Heart right ventricle (tissue), 16 donors: ENCODE measurements at regions of chr15 and their contacts with region 1.

Region 1: DNA sequence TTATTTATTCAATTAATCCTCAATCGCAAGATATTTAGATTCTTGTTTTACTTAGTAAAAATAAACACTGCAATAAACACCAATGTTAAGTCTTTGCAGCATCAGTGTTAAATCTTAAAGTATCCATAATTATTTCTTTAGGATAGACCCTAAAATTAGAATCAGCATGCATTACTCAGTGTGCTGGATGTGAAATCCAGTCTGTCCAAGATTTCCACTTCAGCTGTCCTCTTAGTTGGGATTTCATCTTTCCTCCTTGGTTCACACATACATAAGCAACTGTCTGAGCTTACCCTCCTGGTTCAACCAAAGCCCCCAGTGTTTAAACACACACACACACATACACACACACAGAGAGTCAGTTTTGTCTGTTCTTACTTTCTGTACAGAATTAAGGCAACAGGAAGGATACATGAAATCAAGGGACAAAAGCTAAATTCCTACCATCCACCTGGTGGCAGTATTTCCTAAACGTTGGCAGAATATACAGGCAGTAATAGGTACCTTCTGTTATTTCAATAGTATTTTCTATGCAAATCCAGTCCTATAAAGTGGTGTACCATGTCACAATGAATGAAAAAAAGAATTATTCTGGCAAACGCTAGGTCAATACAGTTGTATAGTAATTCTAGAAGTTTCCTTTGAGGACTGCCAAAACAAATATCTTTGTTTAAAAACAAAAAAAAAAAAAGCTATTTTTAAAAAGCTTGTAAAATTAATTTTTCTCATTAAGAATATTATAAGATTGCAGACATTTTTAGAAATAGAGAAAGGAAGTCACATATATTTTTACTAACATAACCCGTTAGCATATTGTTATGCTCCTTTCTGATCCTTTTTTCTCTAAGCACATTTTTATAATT is 27.3 kb upstream of the DMXL2 start:
- DNase-seq: peak in 1 of 2 donors; percentile 62
- ATAC-seq: peak in 7 of 8 donors; percentile 55 to 80 (median 71)
- H3K4me3 ChIP-seq: no peak overlapping the region
- H3K27ac ChIP-seq: no peak overlapping the region
- H3K4me1 ChIP-seq: peaks cover 0 to 10% (median 0%) of the 10 kb centered on the region in 9 donors
- H3K27me3 ChIP-seq: no peaks in the 10 kb centered on the region
- CTCF ChIP-seq: peak; percentile 48 to 87 (median 75)

Region 2: GRCh38 chr15:51536965-51537574 is 112.8 kb before region 1 on chr15:
- intact Hi-C with region 1: no loop called
- DNase-seq: no peak
- ATAC-seq: no peak
- H3K4me3 ChIP-seq: no peak overlapping the region
- H3K27ac ChIP-seq: no peak overlapping the region
- H3K4me1 ChIP-seq: no peaks in the 10 kb centered on the region
- H3K27me3 ChIP-seq: no peaks in the 10 kb centered on the region
- CTCF ChIP-seq: peak in 8 of 9 donors; percentile 5 to 62 (median 36)

Region 3: GRCh38 chr15:51708013-51708412 is 58.1 kb after region 1 on chr15:
- intact Hi-C with region 1: loop called in 1 of 10 experiments (anchors 10 kb)
- DNase-seq: no peak
- ATAC-seq: peak in 6 of 8 donors; percentile 44 to 72 (median 56)
- H3K4me3 ChIP-seq: no peak overlapping the region
- H3K27ac ChIP-seq: peak overlapping the region in 4 of 10 donors; percentile 13 to 62 (median 41)
- H3K4me1 ChIP-seq: no peaks in the 10 kb centered on the region
- H3K27me3 ChIP-seq: no peaks in the 10 kb centered on the region
- CTCF ChIP-seq: no peak

Region 4: DNA sequence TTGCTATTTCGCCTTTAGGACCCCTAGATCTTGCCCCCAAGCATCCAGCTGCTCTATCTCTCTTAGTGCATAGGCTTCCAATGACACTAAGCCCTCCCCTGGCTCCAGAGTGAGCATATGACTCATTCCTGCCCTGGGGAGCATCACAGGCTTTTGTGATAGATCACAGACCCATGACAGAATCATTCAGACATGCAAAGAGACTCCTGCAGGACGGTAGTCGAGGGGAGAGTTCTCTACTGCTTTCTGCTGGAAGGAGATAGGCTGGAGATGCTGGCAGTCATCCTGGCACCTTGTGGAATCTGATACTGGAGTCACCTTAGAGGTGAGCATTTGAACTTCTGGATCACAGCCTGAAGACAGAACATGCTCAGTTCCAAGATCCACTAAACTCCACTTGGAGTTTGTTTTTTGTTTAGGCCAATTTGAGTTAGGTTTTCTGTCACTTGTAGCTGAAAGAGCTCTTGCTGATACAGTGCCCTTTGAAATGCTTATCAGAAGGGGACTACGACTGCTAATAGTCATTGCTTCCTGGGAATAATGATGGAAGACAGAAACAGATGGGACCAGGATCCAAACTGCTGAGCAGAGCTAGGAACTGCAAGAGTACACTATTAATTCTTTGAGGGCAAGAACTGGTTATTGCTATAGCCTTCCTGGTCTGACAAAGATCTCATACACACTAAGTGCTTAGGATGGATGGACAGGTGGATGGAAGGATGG is 76.6 kb after region 1 on chr15:
- intact Hi-C with region 1: loop called in 1 of 10 experiments (anchors 2 kb)
- DNase-seq: peak; percentile 17 to 71
- ATAC-seq: peak; percentile 91 to 99 (median 96)
- H3K4me3 ChIP-seq: no peak overlapping the region
- H3K27ac ChIP-seq: peak overlapping the region in 5 of 10 donors; percentile 18 to 47 (median 37)
- H3K4me1 ChIP-seq: peaks cover 0 to 59% (median 46%) of the 10 kb centered on the region in 9 donors
- H3K27me3 ChIP-seq: no peaks in the 10 kb centered on the region
- CTCF ChIP-seq: no peak

Region 5: DNA sequence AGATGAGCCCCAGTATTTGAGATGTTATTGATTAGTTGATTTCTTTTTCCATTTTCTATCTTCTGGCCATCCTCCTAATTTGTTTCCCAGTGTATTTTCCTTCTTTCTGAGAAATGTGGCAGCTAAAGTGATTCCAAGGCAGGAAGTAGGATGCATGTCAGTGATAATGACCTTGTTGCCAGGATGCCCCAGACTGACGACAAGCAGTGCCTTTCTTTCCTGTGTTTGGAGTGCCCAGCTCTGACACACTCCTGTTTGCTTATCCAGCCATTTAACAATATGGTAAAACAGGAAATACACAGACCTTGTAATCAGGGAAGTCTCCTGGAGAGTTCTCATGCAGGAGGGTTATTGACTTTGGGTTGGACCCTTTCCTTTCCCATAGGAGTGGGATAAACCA is 121.9 kb after region 1 on chr15:
- intact Hi-C with region 1: loop called in 6 of 10 experiments (anchors 1 to 5 kb)
- DNase-seq: no peak
- ATAC-seq: no peak
- H3K4me3 ChIP-seq: no peak overlapping the region
- H3K27ac ChIP-seq: no peak overlapping the region
- H3K4me1 ChIP-seq: peaks cover 0 to 16% (median 0%) of the 10 kb centered on the region in 9 donors
- H3K27me3 ChIP-seq: no peaks in the 10 kb centered on the region
- CTCF ChIP-seq: no peak

Region 6: GRCh38 chr15:51776952-51777574 is 127.2 kb after region 1 on chr15:
- intact Hi-C with region 1: loop called (anchors 1 to 5 kb)
- DNase-seq: peak in 1 of 2 donors; percentile 80
- ATAC-seq: peak; percentile 81 to 95 (median 90)
- H3K4me3 ChIP-seq: no peak overlapping the region
- H3K27ac ChIP-seq: no peak overlapping the region
- H3K4me1 ChIP-seq: peaks cover 0 to 11% (median 0%) of the 10 kb centered on the region in 9 donors
- H3K27me3 ChIP-seq: no peaks in the 10 kb centered on the region
- CTCF ChIP-seq: peak; percentile 49 to 88 (median 80)

Region 7: GRCh38 chr15:51907136-51907914 is 257.4 kb after region 1 on chr15:
- intact Hi-C with region 1: loop called in 1 of 10 experiments (anchors 10 kb)
- DNase-seq: no peak
- ATAC-seq: peak in 1 of 8 donors; percentile 46
- H3K4me3 ChIP-seq: no peak overlapping the region
- H3K27ac ChIP-seq: no peak overlapping the region
- H3K4me1 ChIP-seq: peaks cover 0 to 8% (median 0%) of the 10 kb centered on the region in 9 donors
- H3K27me3 ChIP-seq: no peaks in the 10 kb centered on the region
- CTCF ChIP-seq: no peak